IMR-90 (cell line): ENCODE measurements at regions of chr7 and their contacts with region 1.

Region 1: DNA sequence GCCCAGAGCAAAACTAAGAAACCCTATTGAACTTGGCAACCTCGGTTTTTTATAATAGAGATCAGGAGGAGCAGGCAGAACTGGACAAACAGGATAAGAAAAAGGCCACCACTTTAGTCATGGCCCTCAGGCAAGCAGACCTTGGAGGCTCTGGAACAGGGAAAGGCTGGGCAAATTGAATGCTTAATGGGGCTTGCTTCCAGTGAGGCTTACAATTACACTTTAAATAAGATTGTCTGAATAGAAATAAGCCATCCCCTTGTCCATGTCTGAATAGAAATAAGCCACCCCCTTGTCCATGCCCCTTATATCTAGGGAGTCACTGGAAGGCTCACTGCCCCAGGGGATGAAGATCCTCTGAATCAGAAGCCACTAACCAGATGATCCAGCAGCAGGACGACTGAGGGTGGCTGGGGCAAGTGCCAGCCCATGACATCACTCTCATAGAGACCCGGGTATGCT is 40.6 kb downstream of the AKR1B15 start:
- DNase-seq: peak; percentile 17
- ATAC-seq: no peak
- H3K4me3 ChIP-seq: no peak overlapping the region
- H3K27ac ChIP-seq: no peak overlapping the region
- H3K4me1 ChIP-seq: peaks cover 8% of the 10 kb centered on the region
- H3K27me3 ChIP-seq: peaks cover 4% of the 10 kb centered on the region; the same call in 1 of the 2 replicates
- CTCF ChIP-seq: no peak
- POLR2A ChIP-seq: no peak
- RAD21 ChIP-seq: no peak

Region 2: GRCh38 chr7:134375206-134375605 is 214.3 kb before region 1 on chr7:
- CTCF ChIA-PET with region 1: no interaction called
- POLR2A ChIA-PET with region 1: no interaction called
- dilution Hi-C with region 1: no loop called
- in situ Hi-C with region 1: no loop called
- intact Hi-C with region 1: loop called (anchors 5 kb)
- DNase-seq: no peak
- ATAC-seq: no peak
- H3K4me3 ChIP-seq: no peak overlapping the region
- H3K27ac ChIP-seq: no peak overlapping the region
- H3K4me1 ChIP-seq: no peaks in the 10 kb centered on the region
- H3K27me3 ChIP-seq: peaks cover 1% of the 10 kb centered on the region
- CTCF ChIP-seq: no peak
- POLR2A ChIP-seq: no peak
- RAD21 ChIP-seq: no peak